CD8-positive, alpha-beta T cell (primary cell): ENCODE measurements at regions of chr12 and their contacts with region 1.

Region 1: GRCh38 chr12:6335451-6336078 is 6.3 kb downstream of the TNFRSF1A start:
- DNase-seq: peak; percentile 68 to 95 (median 89)
- ATAC-seq: peak; percentile 68
- H3K4me3 ChIP-seq: peak overlapping the region; percentile 77 to 99
- H3K4me3 Mint-ChIP-seq: no peak overlapping the region
- H3K27ac ChIP-seq: peak overlapping the region; percentile 61 to 87
- H3K27ac Mint-ChIP-seq: no peak overlapping the region
- H3K4me1 ChIP-seq: peaks cover 82% of the 10 kb centered on the region
- H3K4me1 Mint-ChIP-seq: peaks cover 53% of the 10 kb centered on the region
- H3K27me3 ChIP-seq: no peaks in the 10 kb centered on the region
- H3K27me3 Mint-ChIP-seq: no peaks in the 10 kb centered on the region
- CTCF ChIP-seq: peak; percentile 71

Region 2: GRCh38 chr12:6360578-6361490 is 25.3 kb after region 1 on chr12:
- CTCF ChIA-PET with region 1: interaction called, 142 read pairs
- POLR2A ChIA-PET with region 1: interaction called, 8 read pairs
- intact Hi-C with region 1: loop called in 1 of 2 experiments (anchors 1 kb)
- DNase-seq: no peak
- ATAC-seq: no peak
- H3K4me3 ChIP-seq: no peak overlapping the region
- H3K4me3 Mint-ChIP-seq: no peak overlapping the region
- H3K27ac ChIP-seq: no peak overlapping the region
- H3K27ac Mint-ChIP-seq: no peak overlapping the region
- H3K4me1 ChIP-seq: peaks cover 25% of the 10 kb centered on the region
- H3K4me1 Mint-ChIP-seq: peaks cover 24% of the 10 kb centered on the region
- H3K27me3 ChIP-seq: no peaks in the 10 kb centered on the region
- H3K27me3 Mint-ChIP-seq: no peaks in the 10 kb centered on the region
- CTCF ChIP-seq: no peak

Region 3: GRCh38 chr12:6372403-6373003 is 36.9 kb after region 1 on chr12:
- CTCF ChIA-PET with region 1: interaction called, 142 read pairs
- POLR2A ChIA-PET with region 1: interaction called, 13 read pairs
- intact Hi-C with region 1: loop called (anchors 1 kb)
- DNase-seq: no peak
- ATAC-seq: no peak
- H3K4me3 ChIP-seq: no peak overlapping the region
- H3K4me3 Mint-ChIP-seq: no peak overlapping the region
- H3K27ac ChIP-seq: no peak overlapping the region
- H3K27ac Mint-ChIP-seq: peak overlapping the region; percentile 11
- H3K4me1 ChIP-seq: peaks cover 27% of the 10 kb centered on the region
- H3K4me1 Mint-ChIP-seq: peaks cover 47% of the 10 kb centered on the region
- H3K27me3 ChIP-seq: no peaks in the 10 kb centered on the region
- H3K27me3 Mint-ChIP-seq: no peaks in the 10 kb centered on the region
- CTCF ChIP-seq: no peak

Region 4: DNA sequence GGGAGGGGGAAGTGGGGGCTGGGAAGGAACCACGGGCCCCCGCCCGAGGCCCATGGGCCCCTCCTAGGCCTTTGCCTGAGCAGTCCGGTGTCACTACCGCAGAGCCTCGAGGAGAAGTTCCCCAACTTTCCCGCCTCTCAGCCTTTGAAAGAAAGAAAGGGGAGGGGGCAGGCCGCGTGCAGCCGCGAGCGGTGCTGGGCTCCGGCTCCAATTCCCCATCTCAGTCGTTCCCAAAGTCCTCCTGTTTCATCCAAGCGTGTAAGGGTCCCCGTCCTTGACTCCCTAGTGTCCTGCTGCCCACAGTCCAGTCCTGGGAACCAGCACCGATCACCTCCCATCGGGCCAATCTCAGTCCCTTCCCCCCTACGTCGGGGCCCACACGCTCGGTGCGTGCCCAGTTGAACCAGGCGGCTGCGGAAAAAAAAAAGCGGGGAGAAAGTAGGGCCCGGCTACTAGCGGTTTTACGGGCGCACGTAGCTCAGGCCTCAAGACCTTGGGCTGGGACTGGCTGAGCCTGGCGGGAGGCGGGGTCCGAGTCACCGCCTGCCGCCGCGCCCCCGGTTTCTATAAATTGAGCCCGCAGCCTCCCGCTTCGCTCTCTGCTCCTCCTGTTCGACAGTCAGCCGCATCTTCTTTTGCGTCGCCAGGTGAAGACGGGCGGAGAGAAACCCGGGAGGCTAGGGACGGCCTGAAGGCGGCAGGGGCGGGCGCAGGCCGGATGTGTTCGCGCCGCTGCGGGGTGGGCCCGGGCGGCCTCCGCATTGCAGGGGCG is 198.5 kb after region 1 on chr12 and contains the start of gene GAPDH:
- CTCF ChIA-PET with region 1: interaction called, 70 read pairs
- POLR2A ChIA-PET with region 1: interaction called, 7 read pairs
- intact Hi-C with region 1: loop called (anchors 1 kb)
- DNase-seq: peak; percentile 66 to 92 (median 84)
- ATAC-seq: no peak
- H3K4me3 ChIP-seq: peak within 1 kb of the TSS; percentile 85 to 94
- H3K4me3 Mint-ChIP-seq: peak within 1 kb of the TSS; percentile 87
- H3K27ac ChIP-seq: peak within 1 kb of the TSS; percentile 85 to 88
- H3K27ac Mint-ChIP-seq: peak within 1 kb of the TSS; percentile 96
- H3K4me1 ChIP-seq: peaks cover 47% of the 10 kb centered on the region
- H3K4me1 Mint-ChIP-seq: peaks cover 49% of the 10 kb centered on the region
- H3K27me3 ChIP-seq: no peaks in the 10 kb centered on the region
- H3K27me3 Mint-ChIP-seq: no peaks in the 10 kb centered on the region
- CTCF ChIP-seq: no peak
- total RNA-seq, gene GAPDH: 503 to 513 TPM